ENCODE measurements at regions of chr10 and their contacts with region 1.

Region 1: GRCh38 chr10:33248638-33249037 is 85.8 kb downstream of the NRP1 start:
- DNase-seq: peak in 8 of 9 donors; percentile 38 to 86 (median 76)
- ATAC-seq: peak; percentile 97
- H3K4me3 ChIP-seq: peak overlapping the region; percentile 21
- H3K4me3 Mint-ChIP-seq: peak overlapping the region; percentile 60 to 89 (median 78)
- H3K27ac ChIP-seq: no peak overlapping the region
- H3K27ac Mint-ChIP-seq: peak overlapping the region; percentile 70 to 94 (median 87)
- H3K4me1 ChIP-seq: peaks cover 21 to 29% of the 10 kb centered on the region in 2 donors
- H3K4me1 Mint-ChIP-seq: peaks cover 28 to 80% (median 64%) of the 10 kb centered on the region in 7 donors
- H3K27me3 ChIP-seq: no peaks in the 10 kb centered on the region
- H3K27me3 Mint-ChIP-seq: peaks cover 0 to 43% (median 0%) of the 10 kb centered on the region in 5 donors

Region 2: DNA sequence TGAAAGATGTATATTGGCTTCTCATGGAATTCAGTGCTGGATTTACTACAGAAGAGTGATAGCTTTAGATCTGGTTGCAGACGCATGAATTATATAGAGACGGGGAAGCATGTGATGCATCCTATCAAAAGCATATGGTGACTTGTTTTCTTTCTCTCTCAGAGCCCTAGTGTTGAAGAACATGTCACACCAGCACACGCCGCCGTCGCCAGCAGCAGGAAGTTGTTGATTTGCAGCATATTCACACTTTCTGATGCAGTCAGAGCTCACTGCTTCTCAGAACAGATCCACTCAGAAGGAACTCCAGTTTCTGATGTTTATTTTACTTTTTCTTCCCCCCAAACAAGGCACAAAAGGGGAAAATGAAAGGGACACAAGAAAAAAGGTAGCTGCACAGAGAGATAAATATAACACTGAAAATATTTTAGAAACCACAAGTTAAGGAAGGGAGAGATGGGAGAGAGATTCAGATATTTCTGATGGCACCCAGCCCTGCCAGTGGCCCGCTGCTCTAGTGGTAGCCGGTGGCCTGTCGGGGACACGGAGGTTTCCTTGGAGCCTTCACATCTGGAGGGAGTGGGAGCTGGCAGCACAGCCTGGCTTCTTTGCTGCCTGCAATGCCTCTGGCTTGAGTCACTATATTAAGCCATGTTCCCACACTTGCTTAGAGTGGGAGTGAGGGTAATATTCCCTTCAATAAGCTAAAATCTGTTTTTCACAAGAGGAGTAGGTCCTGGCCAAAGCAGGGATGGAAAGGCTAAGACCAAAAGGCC is 37.3 kb before region 1 on chr10:
- CTCF ChIA-PET with region 1: interaction called, 3 read pairs
- POLR2A ChIA-PET with region 1: interaction called, 9 read pairs
- intact Hi-C with region 1: loop called (anchors 1 to 5 kb)
- DNase-seq: peak in 6 of 9 donors; percentile 25 to 59 (median 38)
- ATAC-seq: peak; percentile 68
- H3K4me3 ChIP-seq: no peak overlapping the region
- H3K4me3 Mint-ChIP-seq: peak overlapping the region; percentile 45 to 77 (median 65)
- H3K27ac ChIP-seq: no peak overlapping the region
- H3K27ac Mint-ChIP-seq: peak overlapping the region; percentile 77 to 96 (median 91)
- H3K4me1 ChIP-seq: no peaks in the 10 kb centered on the region
- H3K4me1 Mint-ChIP-seq: peaks cover 12 to 40% (median 30%) of the 10 kb centered on the region in 7 donors
- H3K27me3 ChIP-seq: no peaks in the 10 kb centered on the region
- H3K27me3 Mint-ChIP-seq: peaks cover 0 to 2% (median 0%) of the 10 kb centered on the region in 5 donors

Measured in naive thymus-derived CD4-positive, alpha-beta T cell (primary cell).